Calu3 (cell line): ENCODE measurements at regions of chr19 and their contacts with region 1.

Region 1: DNA sequence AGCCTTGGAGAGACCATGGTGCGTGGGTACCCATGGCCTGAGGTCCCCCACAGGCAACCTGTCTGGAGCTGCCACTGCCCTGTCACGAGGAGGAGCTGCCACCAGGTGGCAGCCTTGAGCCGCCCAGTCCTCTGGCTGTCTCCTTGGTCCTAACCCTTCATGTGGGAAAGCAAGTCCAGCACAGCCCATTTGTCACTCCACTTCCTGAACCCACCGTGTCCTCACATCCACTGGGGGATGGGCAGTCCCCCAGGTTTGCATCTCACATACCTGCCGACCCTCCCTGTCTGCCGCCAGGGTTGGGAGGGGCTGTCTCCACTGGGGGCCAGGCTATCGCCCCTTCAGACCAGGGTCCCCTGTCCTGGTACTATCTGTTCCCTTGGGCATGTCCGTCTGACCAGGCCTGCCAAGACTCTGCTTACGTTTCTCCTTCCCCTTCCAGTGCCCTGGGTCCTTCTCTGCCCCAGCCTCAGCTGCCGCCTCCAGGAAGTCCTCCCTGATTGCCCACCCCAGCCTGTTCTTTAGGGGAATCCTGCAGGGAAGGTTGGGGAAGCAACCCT is 4.5 kb downstream of the FAM174C start:
- DNase-seq: peak; percentile 79
- H3K4me3 Mint-ChIP-seq: no peak overlapping the region
- H3K27ac Mint-ChIP-seq: no peak overlapping the region
- H3K4me1 Mint-ChIP-seq: peaks cover 8% of the 10 kb centered on the region
- H3K27me3 Mint-ChIP-seq: peaks cover 12% of the 10 kb centered on the region
- CTCF ChIP-seq: peak; percentile 66

Region 2: DNA sequence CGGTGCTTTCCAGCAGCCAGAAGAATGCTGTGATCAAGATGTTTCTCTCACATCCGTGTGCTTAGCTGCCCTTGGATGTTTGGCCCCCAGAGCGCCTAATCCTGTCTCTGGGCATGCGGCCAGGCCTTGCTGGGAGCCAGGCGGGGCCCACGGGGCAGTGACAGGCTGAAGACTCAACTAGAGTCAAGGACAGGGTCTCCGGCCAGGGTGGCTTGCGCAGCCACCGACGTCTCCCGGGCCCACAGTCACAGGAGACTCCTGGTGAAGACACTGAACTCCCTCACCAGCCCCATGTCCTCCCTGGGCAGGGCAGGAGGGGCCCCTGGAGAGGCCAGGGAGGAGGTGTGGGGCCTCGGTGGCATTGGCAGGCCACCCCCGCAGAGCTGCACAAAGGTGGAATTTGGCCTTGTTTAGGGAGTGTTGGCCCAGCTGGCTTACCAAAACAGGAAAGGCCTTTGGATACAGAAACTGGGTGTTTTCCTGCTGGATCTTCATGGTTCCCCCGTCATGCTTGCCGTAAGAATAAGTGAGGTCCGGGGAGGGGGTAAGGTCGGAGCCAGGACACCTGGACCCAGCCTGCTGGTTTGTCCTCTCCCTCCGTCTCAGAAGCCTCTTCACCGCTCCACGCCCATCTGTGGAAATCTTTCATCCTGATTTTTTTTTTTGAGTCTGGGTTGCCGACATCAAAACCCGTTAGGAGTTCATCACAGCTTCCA is 93.8 kb after region 1 on chr19:
- CTCF ChIA-PET with region 1: interaction called, 3 read pairs
- intact Hi-C with region 1: loop called (anchors 2 kb)
- DNase-seq: no peak
- H3K4me3 Mint-ChIP-seq: no peak overlapping the region
- H3K27ac Mint-ChIP-seq: no peak overlapping the region
- H3K4me1 Mint-ChIP-seq: no peaks in the 10 kb centered on the region
- H3K27me3 Mint-ChIP-seq: no peaks in the 10 kb centered on the region
- CTCF ChIP-seq: no peak